Activated T-helper 2 cell treated with anti-CD3 and anti-CD28 coated beads, Interferon-gamma antibody, Interleukin-2, Interleukin-4, amounts not matched to agents 10 μg/mL and 5 μg/mL and 100 μg/mL, durations not matched to agents 14 hours and 24 hours and 36 hours (primary cell): ENCODE measurements at regions of chr16 and their contacts with region 1.

Region 1: DNA sequence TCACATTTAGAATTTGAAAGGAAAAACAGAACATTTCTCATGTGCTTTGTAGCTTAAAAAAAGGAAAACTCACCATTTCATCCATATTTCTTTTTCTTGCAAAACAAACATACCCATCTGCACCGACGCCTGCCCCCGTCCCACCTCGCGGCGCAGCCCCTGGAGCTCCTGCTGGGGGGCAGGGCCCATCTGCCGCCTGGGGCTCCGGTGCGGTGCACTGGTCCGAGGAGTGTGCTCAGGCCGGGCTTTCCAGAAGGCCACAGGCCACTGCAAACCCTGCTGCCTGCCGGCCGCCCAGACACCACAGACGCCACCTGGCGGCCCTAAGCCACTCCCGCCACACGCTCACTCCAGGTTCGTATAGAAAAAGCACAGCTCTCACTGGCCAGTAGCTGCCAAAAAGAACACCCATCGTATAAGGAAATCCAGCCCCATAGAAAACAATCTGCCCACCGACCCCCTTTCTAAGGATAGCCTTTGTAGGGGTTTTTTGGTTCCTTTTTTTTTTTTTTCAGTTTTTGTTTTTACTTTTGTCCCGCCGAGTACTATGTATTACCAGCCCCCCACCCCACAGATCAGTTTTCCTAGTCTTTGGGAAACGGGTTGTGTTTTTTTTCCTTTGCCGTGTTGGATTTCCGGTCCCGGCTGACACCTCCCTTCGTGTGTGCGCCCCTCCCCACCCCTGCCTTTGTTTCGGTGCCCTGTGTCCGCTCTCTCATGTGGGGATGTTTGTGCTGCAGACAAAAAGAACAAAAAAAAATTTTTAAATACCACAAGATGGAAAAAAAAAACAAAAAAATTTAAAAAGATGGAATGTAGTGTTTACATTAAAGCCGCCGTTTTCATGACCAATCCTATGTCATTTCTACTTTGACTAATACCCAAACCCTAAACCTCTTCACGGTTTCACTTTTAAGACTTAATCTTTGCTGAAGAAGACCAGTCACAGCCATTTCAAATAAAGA is 68.8 kb downstream of the AMFR start:
- DNase-seq: peak; percentile 49
- H3K4me3 Mint-ChIP-seq: peak overlapping the region; percentile 86
- H3K27ac Mint-ChIP-seq: peak overlapping the region; percentile 91
- H3K4me1 Mint-ChIP-seq: peaks cover 32% of the 10 kb centered on the region
- H3K27me3 Mint-ChIP-seq: no peaks in the 10 kb centered on the region

Region 2: GRCh38 chr16:56203052-56203451 is 153.5 kb before region 1 on chr16:
- intact Hi-C with region 1: loop called (anchors 2 kb)
- DNase-seq: peak; percentile 35
- H3K4me3 Mint-ChIP-seq: no peak overlapping the region
- H3K27ac Mint-ChIP-seq: no peak overlapping the region
- H3K4me1 Mint-ChIP-seq: peaks cover 14% of the 10 kb centered on the region
- H3K27me3 Mint-ChIP-seq: peaks cover 17% of the 10 kb centered on the region

Region 3: GRCh38 chr16:56370877-56371659 is 14.5 kb after region 1 on chr16:
- intact Hi-C with region 1: no loop called
- DNase-seq: no peak
- H3K4me3 Mint-ChIP-seq: no peak overlapping the region
- H3K27ac Mint-ChIP-seq: no peak overlapping the region
- H3K4me1 Mint-ChIP-seq: peaks cover 20% of the 10 kb centered on the region
- H3K27me3 Mint-ChIP-seq: no peaks in the 10 kb centered on the region

Region 4: DNA sequence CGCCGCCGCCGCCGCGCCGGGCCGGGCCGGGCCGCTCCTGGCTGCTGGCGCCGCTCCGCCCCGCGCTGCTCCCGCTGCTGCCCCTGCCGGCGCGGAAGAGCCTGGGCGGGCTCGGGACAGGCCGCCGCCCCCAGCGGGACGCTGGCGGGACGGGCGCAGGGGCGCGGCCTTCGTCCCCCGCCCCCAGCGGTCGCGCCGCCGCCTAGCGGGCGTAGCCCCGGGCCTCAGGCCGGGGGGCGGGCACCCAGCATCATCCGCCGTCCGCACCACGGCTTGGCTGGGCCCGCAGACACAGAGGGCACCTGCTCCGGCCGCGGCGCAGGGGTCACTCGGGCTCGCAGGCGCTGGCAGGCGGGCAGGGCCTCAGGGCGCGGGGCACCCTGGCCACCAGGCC is 68.9 kb after region 1 on chr16 and contains the start of gene AMFR:
- intact Hi-C with region 1: loop called (anchors 2 kb)
- DNase-seq: peak; percentile 71
- H3K4me3 Mint-ChIP-seq: peak within 1 kb of the TSS; percentile 98
- H3K27ac Mint-ChIP-seq: peak within 1 kb of the TSS; percentile 88
- H3K4me1 Mint-ChIP-seq: peaks cover 41% of the 10 kb centered on the region
- H3K27me3 Mint-ChIP-seq: no peaks in the 10 kb centered on the region
- total RNA-seq, gene AMFR: 58.8 and 59.8 TPM in 2 replicates

Region 5: DNA sequence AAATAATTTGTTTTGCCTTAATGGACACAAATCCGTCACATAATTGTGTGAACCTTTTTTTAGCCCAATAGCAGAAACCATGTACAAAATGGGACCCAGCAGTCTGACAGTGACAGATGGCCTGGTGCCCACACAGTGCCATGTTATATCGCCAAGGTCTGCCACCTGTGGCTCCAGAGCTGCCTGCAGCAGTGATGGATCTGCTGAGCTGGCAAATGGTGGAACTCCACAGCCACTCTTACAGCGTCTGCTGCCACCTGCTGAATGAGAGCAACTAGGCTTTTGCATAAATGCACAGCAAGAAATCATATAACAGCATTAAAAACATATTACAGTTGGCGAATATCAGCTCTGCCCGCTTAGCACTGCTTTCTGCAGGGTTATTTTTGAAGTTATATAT is 432.8 kb after region 1 on chr16:
- intact Hi-C with region 1: loop called (anchors 10 kb)
- DNase-seq: no peak
- H3K4me3 Mint-ChIP-seq: no peak overlapping the region
- H3K27ac Mint-ChIP-seq: no peak overlapping the region
- H3K4me1 Mint-ChIP-seq: peaks cover 2% of the 10 kb centered on the region
- H3K27me3 Mint-ChIP-seq: no peaks in the 10 kb centered on the region